Dendritic cell treated with granulocyte-macrophage colony-stimulating factor and Interleukin-4, amounts not matched to agents 40 ng/mL and 50 ng/mL, for 4 days (primary cell): ENCODE measurements at regions of chr22 and their contacts with region 1.

Region 1: DNA sequence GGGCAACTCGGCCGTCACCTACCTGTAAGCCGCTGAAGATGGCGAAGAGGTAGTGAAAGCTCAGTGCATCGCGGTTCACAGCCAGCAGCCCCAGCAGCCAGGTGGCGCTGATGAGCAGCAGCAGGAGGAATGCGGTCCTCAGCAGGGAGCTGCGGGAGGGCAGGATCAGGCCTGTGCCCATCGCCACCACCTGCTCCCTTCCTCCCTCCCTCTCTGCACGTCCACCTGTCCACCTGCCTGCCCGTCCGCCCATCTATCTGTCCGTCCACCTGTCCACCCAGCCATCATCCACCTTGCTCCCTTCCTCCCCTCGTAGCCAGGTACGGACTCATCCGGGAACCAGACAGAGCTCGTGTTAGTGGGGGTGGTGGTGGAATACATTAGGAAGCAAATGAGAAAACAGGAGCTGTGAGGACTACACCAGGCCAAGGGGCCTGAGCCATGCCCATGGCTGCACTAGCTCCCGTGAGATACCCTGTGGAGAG is 32.2 kb downstream of the TRMU start:
- H3K4me3 Mint-ChIP-seq: no peak overlapping the region
- H3K27ac Mint-ChIP-seq: no peak overlapping the region
- H3K4me1 Mint-ChIP-seq: no peaks in the 10 kb centered on the region
- H3K27me3 Mint-ChIP-seq: peaks cover 38% of the 10 kb centered on the region

Region 2: GRCh38 chr22:46250035-46250782 is 117.5 kb before region 1 on chr22 and contains the start of gene CDPF1:
- intact Hi-C with region 1: no loop called
- H3K4me3 Mint-ChIP-seq: peak within 1 kb of the TSS; percentile 90
- H3K27ac Mint-ChIP-seq: peak within 1 kb of the TSS; percentile 91
- H3K4me1 Mint-ChIP-seq: peaks cover 28% of the 10 kb centered on the region
- H3K27me3 Mint-ChIP-seq: no peaks in the 10 kb centered on the region

Region 3: GRCh38 chr22:46542011-46542985 is 174.5 kb after region 1 on chr22:
- intact Hi-C with region 1: loop called (anchors 1 kb)
- H3K4me3 Mint-ChIP-seq: no peak overlapping the region
- H3K27ac Mint-ChIP-seq: no peak overlapping the region
- H3K4me1 Mint-ChIP-seq: peaks cover 39% of the 10 kb centered on the region
- H3K27me3 Mint-ChIP-seq: peaks cover 59% of the 10 kb centered on the region